ENCODE measurements at regions of chr10 and their contacts with region 1.

Region 1: GRCh38 chr10:9209105-9209798 is 1154.8 kb downstream of the GATA3 start:
- DNase-seq: peak; percentile 83
- H3K4me3 Mint-ChIP-seq: no peak overlapping the region
- H3K27ac Mint-ChIP-seq: no peak overlapping the region
- H3K4me1 Mint-ChIP-seq: no peaks in the 10 kb centered on the region
- H3K27me3 Mint-ChIP-seq: peaks cover 9% of the 10 kb centered on the region

Region 2: GRCh38 chr10:7872041-7872442 is 1337.2 kb before region 1 on chr10:
- CTCF ChIA-PET with region 1: interaction called, 5 read pairs
- POLR2A ChIA-PET with region 1: no interaction called
- intact Hi-C with region 1: loop called (anchors 2 kb)
- DNase-seq: no peak
- H3K4me3 Mint-ChIP-seq: peak overlapping the region; percentile 57
- H3K27ac Mint-ChIP-seq: no peak overlapping the region
- H3K4me1 Mint-ChIP-seq: peaks cover 20% of the 10 kb centered on the region
- H3K27me3 Mint-ChIP-seq: no peaks in the 10 kb centered on the region

Region 3: DNA sequence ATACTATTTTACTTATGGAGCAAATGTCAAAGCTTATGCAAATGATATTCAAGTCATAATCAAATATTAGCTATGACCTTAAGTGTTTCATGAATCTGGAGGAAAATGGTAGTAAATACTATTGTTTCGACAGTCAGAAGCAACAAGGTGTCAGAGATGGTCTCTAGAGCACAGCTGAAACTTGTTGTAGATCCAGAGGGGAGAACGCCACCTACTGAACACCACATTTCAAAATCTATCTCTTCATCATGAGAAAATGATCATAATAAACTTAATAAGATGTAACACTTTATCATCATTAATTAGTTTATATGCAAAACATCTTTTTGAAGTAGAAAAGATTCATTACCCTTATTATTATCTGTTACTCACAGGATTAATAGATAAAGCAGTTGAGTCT is 736.0 kb before region 1 on chr10:
- CTCF ChIA-PET with region 1: no interaction called
- POLR2A ChIA-PET with region 1: no interaction called
- intact Hi-C with region 1: loop called (anchors 10 kb)
- DNase-seq: peak; percentile 13
- H3K4me3 Mint-ChIP-seq: no peak overlapping the region
- H3K27ac Mint-ChIP-seq: no peak overlapping the region
- H3K4me1 Mint-ChIP-seq: peaks cover 4% of the 10 kb centered on the region
- H3K27me3 Mint-ChIP-seq: peaks cover 13% of the 10 kb centered on the region

Region 4: DNA sequence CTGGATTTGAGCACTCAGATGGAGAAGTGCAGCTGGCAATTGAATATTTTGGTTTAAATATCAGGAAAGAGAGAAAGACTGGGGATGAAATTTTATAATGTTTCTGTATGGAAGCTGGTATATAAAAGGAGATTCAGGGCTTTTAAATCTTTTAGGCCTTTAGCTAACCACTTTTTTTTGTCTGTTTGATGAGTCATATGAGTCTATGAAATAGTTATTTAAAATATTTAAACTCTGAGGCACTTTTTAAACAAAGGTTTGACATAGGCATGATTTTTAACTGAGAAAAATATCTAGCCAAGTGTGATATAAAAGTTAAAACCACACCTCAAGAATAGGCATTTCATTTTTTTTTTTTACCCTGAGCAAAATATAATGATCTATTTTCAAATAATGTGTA is 210.5 kb before region 1 on chr10:
- CTCF ChIA-PET with region 1: no interaction called
- POLR2A ChIA-PET with region 1: no interaction called
- intact Hi-C with region 1: loop called (anchors 10 kb)
- DNase-seq: no peak
- H3K4me3 Mint-ChIP-seq: no peak overlapping the region
- H3K27ac Mint-ChIP-seq: no peak overlapping the region
- H3K4me1 Mint-ChIP-seq: peaks cover 38% of the 10 kb centered on the region
- H3K27me3 Mint-ChIP-seq: no peaks in the 10 kb centered on the region

Region 5: GRCh38 chr10:9302120-9302746 is 93.0 kb after region 1 on chr10:
- CTCF ChIA-PET with region 1: interaction called, 4 read pairs
- POLR2A ChIA-PET with region 1: no interaction called
- intact Hi-C with region 1: loop called (anchors 2 kb)
- DNase-seq: no peak
- H3K4me3 Mint-ChIP-seq: no peak overlapping the region
- H3K27ac Mint-ChIP-seq: no peak overlapping the region
- H3K4me1 Mint-ChIP-seq: no peaks in the 10 kb centered on the region
- H3K27me3 Mint-ChIP-seq: peaks cover 7% of the 10 kb centered on the region

Region 6: DNA sequence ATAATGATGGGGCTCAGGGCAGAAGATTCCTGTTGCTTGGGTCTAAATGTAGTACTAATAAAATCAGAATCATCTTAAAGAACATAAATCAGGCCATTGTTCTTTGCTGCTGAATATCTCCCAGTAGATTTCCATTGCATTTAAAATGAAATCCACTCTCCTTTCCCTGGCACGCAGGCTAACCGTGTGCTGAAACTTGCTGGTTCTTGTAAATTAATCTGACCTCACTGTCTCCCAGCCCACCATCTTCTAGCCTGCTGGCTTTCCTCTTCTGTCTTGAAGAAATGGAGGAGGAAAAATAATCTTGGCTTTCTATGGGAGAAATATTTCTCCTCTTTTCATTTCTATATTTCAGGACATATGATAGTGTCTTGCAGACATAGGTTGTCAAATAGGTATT is 242.1 kb after region 1 on chr10:
- CTCF ChIA-PET with region 1: no interaction called
- POLR2A ChIA-PET with region 1: no interaction called
- intact Hi-C with region 1: no loop called
- DNase-seq: no peak
- H3K4me3 Mint-ChIP-seq: no peak overlapping the region
- H3K27ac Mint-ChIP-seq: no peak overlapping the region
- H3K4me1 Mint-ChIP-seq: no peaks in the 10 kb centered on the region
- H3K27me3 Mint-ChIP-seq: peaks cover 2% of the 10 kb centered on the region